Panc1 (cell line): ENCODE measurements at regions of chr4 and their contacts with region 1.

Region 1: DNA sequence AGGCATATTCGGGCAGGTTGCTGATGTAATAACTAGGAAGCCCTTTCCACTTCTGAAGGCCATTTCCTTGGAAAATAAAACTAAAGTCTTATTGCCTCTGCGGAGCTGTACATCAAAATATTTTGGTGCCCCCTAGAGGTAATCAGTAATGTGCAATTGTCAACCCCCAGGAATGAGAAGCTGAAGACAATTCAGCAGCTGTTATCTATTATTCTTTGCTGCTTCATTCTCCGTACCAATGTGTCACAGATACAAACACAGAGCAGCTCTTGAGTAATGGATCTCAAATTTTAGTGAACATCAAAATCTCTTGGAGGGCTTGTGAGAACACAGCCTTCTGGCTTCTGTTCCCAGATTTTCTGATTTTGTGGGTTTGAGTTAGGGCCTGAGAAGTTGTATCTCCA is 3.5 kb upstream of the SLIT2 start:
- DNase-seq: no peak
- ATAC-seq: no peak
- H3K4me3 ChIP-seq: no peak overlapping the region
- H3K27ac ChIP-seq: no peak overlapping the region
- H3K4me1 ChIP-seq: no peaks in the 10 kb centered on the region
- H3K27me3 ChIP-seq: no peaks in the 10 kb centered on the region
- CTCF ChIP-seq: peak; percentile 62

Region 2: GRCh38 chr4:20126906-20127305 is 121.3 kb before region 1 on chr4:
- CTCF ChIA-PET with region 1: no interaction called
- POLR2A ChIA-PET with region 1: no interaction called
- in situ Hi-C with region 1: no loop called
- intact Hi-C with region 1: no loop called
- DNase-seq: no peak
- ATAC-seq: no peak
- H3K4me3 ChIP-seq: no peak overlapping the region
- H3K27ac ChIP-seq: no peak overlapping the region
- H3K4me1 ChIP-seq: no peaks in the 10 kb centered on the region
- H3K27me3 ChIP-seq: no peaks in the 10 kb centered on the region
- CTCF ChIP-seq: no peak

Region 3: DNA sequence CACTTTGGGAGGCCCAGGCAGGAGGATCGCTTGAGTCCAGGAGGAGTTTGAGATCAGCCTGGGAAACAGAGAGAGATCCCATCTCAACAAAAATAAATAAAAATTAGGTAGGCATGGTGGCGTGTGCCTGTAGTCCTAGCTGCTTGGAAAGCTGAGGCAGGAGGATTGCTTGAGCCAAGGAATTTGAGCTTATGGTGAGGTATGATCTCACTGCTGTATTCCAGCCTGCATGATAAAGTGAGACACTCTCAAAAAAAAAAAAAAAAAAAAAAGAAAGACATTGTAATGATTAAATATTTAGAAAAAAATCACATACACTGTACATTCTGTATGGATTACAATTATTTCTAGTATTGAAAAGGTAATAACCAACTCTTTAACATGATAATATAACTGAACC is 90.7 kb after region 1 on chr4:
- CTCF ChIA-PET with region 1: interaction called, 13 read pairs
- POLR2A ChIA-PET with region 1: no interaction called
- in situ Hi-C with region 1: no loop called
- intact Hi-C with region 1: no loop called
- DNase-seq: no peak
- ATAC-seq: no peak
- H3K4me3 ChIP-seq: no peak overlapping the region
- H3K27ac ChIP-seq: no peak overlapping the region
- H3K4me1 ChIP-seq: no peaks in the 10 kb centered on the region
- H3K27me3 ChIP-seq: no peaks in the 10 kb centered on the region
- CTCF ChIP-seq: no peak